ENCODE measurements at regions of chr20 and their contacts with region 1.

Region 1: DNA sequence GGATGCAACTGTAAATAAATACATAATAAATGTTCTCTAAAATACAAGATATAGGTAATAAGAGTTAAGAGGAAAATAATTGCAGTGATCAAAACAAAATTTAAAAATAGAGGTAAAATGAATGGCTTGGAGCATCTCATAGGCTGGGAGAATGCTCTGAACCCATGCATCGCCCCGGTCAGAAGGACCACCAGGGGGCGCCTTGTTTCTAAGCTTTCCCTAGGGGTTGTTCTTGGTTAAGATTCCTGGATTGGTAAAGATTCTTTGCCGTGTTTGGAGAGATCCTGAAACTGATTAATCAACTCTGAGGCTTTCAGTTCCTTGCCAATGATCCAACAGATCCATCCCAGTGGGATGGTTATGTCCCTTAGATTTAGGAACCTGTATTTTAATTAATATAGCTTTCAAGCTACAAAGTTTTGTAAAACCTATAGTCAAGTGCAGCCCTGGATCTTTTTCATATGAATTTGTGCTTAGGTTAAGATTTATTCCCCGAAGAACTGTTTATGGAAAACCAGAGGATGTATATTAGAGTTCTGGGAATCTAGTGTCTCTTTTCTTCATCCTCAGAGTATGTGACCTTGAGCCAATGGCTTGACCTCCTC is 45.3 kb upstream of the PRELID3B start:
- DNase-seq: peak; percentile 48 to 70
- H3K4me3 ChIP-seq: no peak overlapping the region
- H3K27ac ChIP-seq: no peak overlapping the region
- H3K4me1 ChIP-seq: peaks cover 6% of the 10 kb centered on the region
- H3K27me3 ChIP-seq: no peaks in the 10 kb centered on the region
- CTCF ChIP-seq: peak; percentile 95

Region 2: DNA sequence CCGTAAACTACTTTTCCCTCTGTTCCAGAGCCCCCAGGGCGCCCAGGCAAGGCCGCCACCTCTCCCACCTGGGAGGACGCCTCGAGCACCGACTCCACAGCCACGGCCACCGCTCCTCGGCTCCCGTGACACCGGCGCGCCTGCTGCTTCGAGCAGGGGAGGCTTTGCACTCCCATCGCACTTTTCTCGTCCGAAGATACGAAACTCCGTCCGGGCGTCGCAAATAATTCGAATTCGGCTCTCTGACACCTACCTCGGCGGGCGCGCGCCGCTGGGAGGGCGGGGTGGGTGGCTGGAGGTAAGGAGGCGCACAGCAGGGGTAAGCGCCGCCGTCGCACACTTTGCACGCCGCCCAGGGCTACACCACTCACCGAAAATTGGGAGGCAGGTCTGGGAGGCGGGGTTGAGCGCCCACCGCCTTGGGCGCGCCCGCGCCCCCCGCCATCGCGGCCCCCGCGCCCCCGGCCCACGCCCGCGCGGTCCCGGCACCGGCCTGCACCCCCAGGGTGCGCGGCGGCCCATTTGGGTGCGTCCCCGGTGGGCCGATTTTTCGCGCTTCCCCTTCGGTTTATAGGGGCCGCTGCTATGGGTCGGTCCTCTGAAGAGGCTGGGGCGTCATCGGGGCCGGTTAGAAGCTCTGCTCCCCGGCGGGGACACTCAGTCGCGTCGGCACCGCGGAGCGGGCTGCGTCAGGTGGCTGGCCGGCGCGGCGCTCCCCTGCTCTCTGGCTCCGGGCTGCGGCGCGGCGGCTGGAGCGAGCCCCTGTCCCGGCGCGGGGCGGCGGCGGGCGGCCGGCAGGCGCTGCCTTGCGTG is 199.2 kb before region 1 on chr20:
- CTCF ChIA-PET with region 1: no interaction called
- POLR2A ChIA-PET with region 1: no interaction called
- intact Hi-C with region 1: loop called (anchors 5 kb)
- DNase-seq: peak; percentile 66 to 80
- H3K4me3 ChIP-seq: peak overlapping the region; percentile 55
- H3K27ac ChIP-seq: no peak overlapping the region; the same call in 1 of the 2 replicates
- H3K4me1 ChIP-seq: peaks cover 19% of the 10 kb centered on the region
- H3K27me3 ChIP-seq: no peaks in the 10 kb centered on the region
- CTCF ChIP-seq: no peak

Measured in PC-9 (cell line).